ENCODE measurements at regions of chr9 and their contacts with region 1.

Region 1: GRCh38 chr9:121322037-121322775 is 47.8 kb downstream of the STOM start:
- DNase-seq: no peak
- ATAC-seq: no peak
- H3K4me3 Mint-ChIP-seq: no peak overlapping the region
- H3K27ac Mint-ChIP-seq: peak overlapping the region; percentile 65
- H3K4me1 Mint-ChIP-seq: peaks cover 45% of the 10 kb centered on the region
- H3K27me3 Mint-ChIP-seq: no peaks in the 10 kb centered on the region

Region 2: GRCh38 chr9:121278535-121279261 is 43.5 kb before region 1 on chr9:
- CTCF ChIA-PET with region 1: interaction called, 13 read pairs
- DNase-seq: peak; percentile 61
- ATAC-seq: peak; percentile 86
- H3K4me3 Mint-ChIP-seq: no peak overlapping the region
- H3K27ac Mint-ChIP-seq: no peak overlapping the region
- H3K4me1 Mint-ChIP-seq: peaks cover 5% of the 10 kb centered on the region
- H3K27me3 Mint-ChIP-seq: no peaks in the 10 kb centered on the region

Region 3: GRCh38 chr9:121340676-121341392 is 18.6 kb after region 1 on chr9:
- CTCF ChIA-PET with region 1: interaction called, 49 read pairs
- DNase-seq: peak; percentile 76
- ATAC-seq: peak; percentile 91
- H3K4me3 Mint-ChIP-seq: no peak overlapping the region
- H3K27ac Mint-ChIP-seq: peak overlapping the region; percentile 47
- H3K4me1 Mint-ChIP-seq: peaks cover 36% of the 10 kb centered on the region
- H3K27me3 Mint-ChIP-seq: no peaks in the 10 kb centered on the region

Region 4: GRCh38 chr9:121369595-121370265 is 47.5 kb after region 1 on chr9 and contains the start of gene STOM:
- CTCF ChIA-PET with region 1: interaction called, 221 read pairs
- DNase-seq: peak; percentile 85
- ATAC-seq: peak; percentile 72
- H3K4me3 Mint-ChIP-seq: peak within 1 kb of the TSS; percentile 79
- H3K27ac Mint-ChIP-seq: peak within 1 kb of the TSS; percentile 90
- H3K4me1 Mint-ChIP-seq: peaks cover 62% of the 10 kb centered on the region
- H3K27me3 Mint-ChIP-seq: no peaks in the 10 kb centered on the region
- total RNA-seq, gene STOM: 93.1 to 131 TPM

Region 5: GRCh38 chr9:121399883-121400607 is 77.8 kb after region 1 on chr9:
- CTCF ChIA-PET with region 1: interaction called, 224 read pairs
- DNase-seq: no peak
- ATAC-seq: peak; percentile 78
- H3K4me3 Mint-ChIP-seq: no peak overlapping the region
- H3K27ac Mint-ChIP-seq: no peak overlapping the region
- H3K4me1 Mint-ChIP-seq: peaks cover 8% of the 10 kb centered on the region
- H3K27me3 Mint-ChIP-seq: peaks cover 10% of the 10 kb centered on the region

Region 6: DNA sequence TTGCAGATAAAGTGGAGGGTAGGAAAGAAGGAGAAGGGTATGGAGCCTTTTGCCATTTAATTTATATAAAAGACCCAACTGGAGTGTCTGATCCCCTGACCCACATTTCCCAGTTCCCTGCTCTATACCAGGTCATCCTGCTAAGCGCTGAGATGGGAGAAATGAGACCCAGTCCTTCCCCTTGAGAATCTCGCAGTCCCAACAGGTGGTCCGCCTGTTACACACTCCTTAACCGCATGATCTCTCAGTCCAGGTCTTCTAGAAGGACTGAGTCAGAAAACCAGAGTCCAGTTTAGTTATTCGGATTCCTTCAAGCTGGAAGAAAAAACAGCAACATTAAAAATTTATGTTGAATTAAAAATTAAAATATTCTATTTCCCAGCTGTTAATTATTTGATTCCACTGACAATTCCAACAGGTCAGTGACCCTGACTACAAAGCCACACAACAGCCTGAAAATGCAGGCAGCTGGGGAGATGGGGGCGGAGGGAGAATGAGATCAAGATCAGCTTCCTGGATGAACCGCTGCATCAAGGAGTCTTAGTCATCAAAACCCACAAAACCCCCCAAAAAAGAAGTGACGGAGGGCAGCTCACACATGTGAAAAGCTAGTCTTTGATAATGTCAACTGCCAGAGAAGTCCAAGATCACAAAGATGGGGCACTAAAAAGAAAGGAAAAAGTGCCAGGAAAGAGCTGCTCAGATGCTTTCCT is 133.5 kb after region 1 on chr9:
- CTCF ChIA-PET with region 1: interaction called, 10 read pairs
- DNase-seq: peak; percentile 85
- ATAC-seq: peak; percentile 91
- H3K4me3 Mint-ChIP-seq: no peak overlapping the region
- H3K27ac Mint-ChIP-seq: peak overlapping the region; percentile 67
- H3K4me1 Mint-ChIP-seq: peaks cover 46% of the 10 kb centered on the region
- H3K27me3 Mint-ChIP-seq: peaks cover 53% of the 10 kb centered on the region

Measured in activated CD8-positive, alpha-beta memory T cell treated with anti-CD3 and anti-CD28 coated beads, Interleukin-2, amount 10 ng/mL, durations not matched to agents 7 days and 5 days (primary cell).